ENCODE measurements at regions of chr17 and their contacts with region 1.

Region 1: GRCh38 chr17:77140166-77140878 is 447 bp upstream of the SEC14L1 start:
- DNase-seq: peak; percentile 96 to 100 (median 99)
- H3K4me3 ChIP-seq: peak overlapping the region; percentile 53 to 96 (median 83)
- H3K27ac ChIP-seq: peak overlapping the region; percentile 66 to 99 (median 97)
- H3K27me3 ChIP-seq: no peaks in the 10 kb centered on the region
- CTCF ChIP-seq: peak in 29 of 56 donors; percentile 3 to 50 (median 25)

Region 2: DNA sequence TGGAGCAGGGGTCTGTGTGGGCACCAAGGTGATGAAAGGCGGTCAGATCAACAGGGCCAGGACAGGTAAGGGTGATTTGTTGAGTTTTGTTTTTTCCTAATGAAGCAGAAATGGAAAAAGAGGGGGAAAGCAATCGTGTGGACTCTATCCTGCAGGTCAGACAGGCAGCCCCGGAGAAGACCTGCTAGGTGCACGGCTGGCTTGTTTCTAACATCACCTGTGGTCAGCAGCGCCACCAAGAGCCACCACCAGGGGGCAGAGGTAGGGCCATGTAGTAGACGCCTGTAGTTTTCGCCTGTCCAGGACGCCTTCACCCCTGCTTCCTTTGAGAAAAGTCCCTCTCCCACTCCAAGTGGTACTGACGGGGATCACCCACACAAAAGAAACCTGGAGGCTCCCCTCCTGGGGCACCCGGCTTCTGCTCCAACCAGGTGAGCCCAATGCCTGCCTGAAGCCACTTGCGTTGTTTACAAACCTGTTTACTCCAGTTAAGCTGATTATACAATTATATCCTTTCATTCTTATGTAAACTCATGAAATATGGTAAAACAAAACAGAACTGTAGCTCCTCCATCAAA is 53.8 kb before region 1 on chr17:
- intact Hi-C with region 1: no loop called
- DNase-seq: peak; percentile 78 to 95 (median 86)
- H3K4me3 ChIP-seq: peak overlapping the region in 22 of 59 donors; percentile 3 to 45 (median 26)
- H3K27ac ChIP-seq: peak overlapping the region in 3 of 59 donors; percentile 44 to 62 (median 48)
- H3K27me3 ChIP-seq: no peaks in the 10 kb centered on the region
- CTCF ChIP-seq: peak; percentile 69 to 98 (median 94)

Region 3: GRCh38 chr17:77096570-77097214 is 43.6 kb before region 1 on chr17:
- intact Hi-C with region 1: loop called (anchors 2 to 5 kb)
- DNase-seq: no peak
- H3K4me3 ChIP-seq: peak overlapping the region in 6 of 59 donors; percentile 0 to 20 (median 6)
- H3K27ac ChIP-seq: peak overlapping the region; percentile 52 to 100 (median 97)
- H3K27me3 ChIP-seq: no peaks in the 10 kb centered on the region
- CTCF ChIP-seq: peak; percentile 68 to 95 (median 85)

Region 4: GRCh38 chr17:77109764-77110359 is 30.5 kb before region 1 on chr17:
- intact Hi-C with region 1: loop called in 1 of 2 experiments (anchors 1 kb)
- DNase-seq: no peak
- H3K4me3 ChIP-seq: peak overlapping the region in 6 of 59 donors; percentile 2 to 36 (median 13)
- H3K27ac ChIP-seq: peak overlapping the region; percentile 43 to 95 (median 87)
- H3K27me3 ChIP-seq: no peaks in the 10 kb centered on the region
- CTCF ChIP-seq: peak in 8 of 56 donors; percentile 4 to 17 (median 10)

Measured in dorsolateral prefrontal cortex (tissue), 120 donors.